IMR-90 (cell line): ENCODE measurements at regions of chr15 and their contacts with region 1.

Region 1: GRCh38 chr15:31482122-31482922 is 155.7 kb downstream of the KLF13 start:
- DNase-seq: no peak
- ATAC-seq: no peak
- H3K4me3 ChIP-seq: no peak overlapping the region
- H3K27ac ChIP-seq: no peak overlapping the region
- H3K4me1 ChIP-seq: no peaks in the 10 kb centered on the region; the same call in 1 of the 2 replicates
- H3K27me3 ChIP-seq: peaks cover 36% of the 10 kb centered on the region
- CTCF ChIP-seq: no peak
- POLR2A ChIP-seq: no peak
- RAD21 ChIP-seq: no peak

Region 2: GRCh38 chr15:31298707-31299172 is 183.6 kb before region 1 on chr15:
- CTCF ChIA-PET with region 1: no interaction called
- POLR2A ChIA-PET with region 1: interaction called, 15 read pairs
- dilution Hi-C with region 1: no loop called
- in situ Hi-C with region 1: no loop called
- intact Hi-C with region 1: no loop called
- DNase-seq: no peak
- ATAC-seq: no peak
- H3K4me3 ChIP-seq: no peak overlapping the region
- H3K27ac ChIP-seq: no peak overlapping the region
- H3K4me1 ChIP-seq: no peaks in the 10 kb centered on the region; the same call in 1 of the 2 replicates
- H3K27me3 ChIP-seq: peaks cover 20% of the 10 kb centered on the region
- CTCF ChIP-seq: no peak
- POLR2A ChIP-seq: no peak
- RAD21 ChIP-seq: no peak

Region 3: GRCh38 chr15:31419820-31420219 is 62.5 kb before region 1 on chr15:
- CTCF ChIA-PET with region 1: no interaction called
- POLR2A ChIA-PET with region 1: no interaction called
- dilution Hi-C with region 1: no loop called
- in situ Hi-C with region 1: no loop called
- intact Hi-C with region 1: no loop called
- DNase-seq: no peak
- ATAC-seq: no peak
- H3K4me3 ChIP-seq: no peak overlapping the region
- H3K27ac ChIP-seq: no peak overlapping the region
- H3K4me1 ChIP-seq: no peaks in the 10 kb centered on the region
- H3K27me3 ChIP-seq: no peaks in the 10 kb centered on the region
- CTCF ChIP-seq: no peak
- POLR2A ChIP-seq: no peak
- RAD21 ChIP-seq: no peak